T-cell (primary cell): ENCODE measurements at regions of chr3 and their contacts with region 1.

Region 1: GRCh38 chr3:36957862-36958686 is 13.2 kb upstream of the TRANK1 start:
- DNase-seq: peak in 1 of 35 experiments; percentile 20
- ATAC-seq: no peak
- H3K4me3 ChIP-seq: no peak overlapping the region
- H3K4me3 Mint-ChIP-seq: peak overlapping the region in 1 of 3 donors; percentile 4
- H3K27ac ChIP-seq: no peak overlapping the region
- H3K27ac Mint-ChIP-seq: peak overlapping the region; percentile 40 to 50
- H3K4me1 ChIP-seq: peaks cover 0 to 3% of the 10 kb centered on the region in 2 experiments
- H3K4me1 Mint-ChIP-seq: peaks cover 0 to 12% (median 10%) of the 10 kb centered on the region in 3 donors
- H3K27me3 ChIP-seq: no peaks in the 10 kb centered on the region
- H3K27me3 Mint-ChIP-seq: no peaks in the 10 kb centered on the region

Region 2: DNA sequence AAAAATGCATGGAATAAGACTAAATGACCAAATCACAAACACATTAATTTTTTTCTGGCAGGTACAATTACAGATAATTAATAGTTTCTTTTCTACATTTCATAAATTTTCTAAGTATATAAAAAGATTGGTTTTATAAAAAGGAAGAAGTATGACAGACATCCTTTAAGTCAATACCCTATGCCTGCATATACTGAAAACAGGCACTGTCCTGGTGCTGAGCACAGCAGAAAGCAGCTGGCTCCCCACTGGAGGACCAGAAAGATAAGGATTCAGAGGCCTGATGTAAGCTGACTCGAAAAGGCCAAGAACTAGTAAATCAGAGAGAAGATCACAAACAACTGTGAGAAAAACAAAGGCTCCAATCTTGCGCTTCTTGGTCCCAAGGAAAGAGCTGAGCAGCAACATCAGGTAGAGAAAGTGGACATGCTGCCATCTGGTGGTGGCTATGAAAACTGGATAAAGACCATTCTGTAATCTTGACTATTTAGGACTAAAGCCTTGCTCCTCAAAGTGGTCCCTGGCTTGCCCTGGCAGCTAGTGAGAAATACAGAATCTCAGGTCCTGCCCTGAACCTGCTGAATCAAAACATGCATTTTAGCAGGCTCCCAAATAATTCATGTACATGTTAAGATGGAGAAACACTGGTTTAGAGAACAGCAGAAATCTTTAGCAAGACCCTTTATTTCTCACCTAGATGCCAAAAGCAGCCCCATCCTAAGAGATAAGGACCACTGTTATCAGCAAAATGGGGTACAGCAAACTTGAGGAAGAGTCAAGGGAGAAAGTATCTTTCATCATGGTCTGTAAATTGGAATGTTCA is 89.2 kb before region 1 on chr3:
- CTCF ChIA-PET with region 1: interaction called, 3 to 13 read pairs
- POLR2A ChIA-PET with region 1: no interaction called
- DNase-seq: peak in 31 of 35 experiments; percentile 5 to 84 (median 35)
- ATAC-seq: peak; percentile 78 to 83 (median 79)
- H3K4me3 ChIP-seq: no peak overlapping the region
- H3K4me3 Mint-ChIP-seq: no peak overlapping the region
- H3K27ac ChIP-seq: no peak overlapping the region
- H3K27ac Mint-ChIP-seq: peak overlapping the region; percentile 44 to 76
- H3K4me1 ChIP-seq: peaks cover 4 to 10% of the 10 kb centered on the region in 2 experiments
- H3K4me1 Mint-ChIP-seq: peaks cover 28 to 46% (median 37%) of the 10 kb centered on the region in 3 donors
- H3K27me3 ChIP-seq: no peaks in the 10 kb centered on the region
- H3K27me3 Mint-ChIP-seq: no peaks in the 10 kb centered on the region

Region 3: GRCh38 chr3:36893137-36893557 is 64.9 kb before region 1 on chr3:
- CTCF ChIA-PET with region 1: interaction called, 4 to 15 read pairs
- POLR2A ChIA-PET with region 1: interaction called in 1 of 2 experiments, 4 read pairs
- DNase-seq: peak in 22 of 35 experiments; percentile 24 to 77 (median 39)
- ATAC-seq: peak; percentile 87 to 97 (median 90)
- H3K4me3 ChIP-seq: no peak overlapping the region
- H3K4me3 Mint-ChIP-seq: peak overlapping the region in 1 of 3 donors; percentile 26
- H3K27ac ChIP-seq: peak overlapping the region; percentile 59
- H3K27ac Mint-ChIP-seq: peak overlapping the region; percentile 92 to 93
- H3K4me1 ChIP-seq: peaks cover 17 to 32% of the 10 kb centered on the region in 2 experiments
- H3K4me1 Mint-ChIP-seq: peaks cover 64 to 72% (median 68%) of the 10 kb centered on the region in 3 donors
- H3K27me3 ChIP-seq: no peaks in the 10 kb centered on the region
- H3K27me3 Mint-ChIP-seq: no peaks in the 10 kb centered on the region

Region 4: DNA sequence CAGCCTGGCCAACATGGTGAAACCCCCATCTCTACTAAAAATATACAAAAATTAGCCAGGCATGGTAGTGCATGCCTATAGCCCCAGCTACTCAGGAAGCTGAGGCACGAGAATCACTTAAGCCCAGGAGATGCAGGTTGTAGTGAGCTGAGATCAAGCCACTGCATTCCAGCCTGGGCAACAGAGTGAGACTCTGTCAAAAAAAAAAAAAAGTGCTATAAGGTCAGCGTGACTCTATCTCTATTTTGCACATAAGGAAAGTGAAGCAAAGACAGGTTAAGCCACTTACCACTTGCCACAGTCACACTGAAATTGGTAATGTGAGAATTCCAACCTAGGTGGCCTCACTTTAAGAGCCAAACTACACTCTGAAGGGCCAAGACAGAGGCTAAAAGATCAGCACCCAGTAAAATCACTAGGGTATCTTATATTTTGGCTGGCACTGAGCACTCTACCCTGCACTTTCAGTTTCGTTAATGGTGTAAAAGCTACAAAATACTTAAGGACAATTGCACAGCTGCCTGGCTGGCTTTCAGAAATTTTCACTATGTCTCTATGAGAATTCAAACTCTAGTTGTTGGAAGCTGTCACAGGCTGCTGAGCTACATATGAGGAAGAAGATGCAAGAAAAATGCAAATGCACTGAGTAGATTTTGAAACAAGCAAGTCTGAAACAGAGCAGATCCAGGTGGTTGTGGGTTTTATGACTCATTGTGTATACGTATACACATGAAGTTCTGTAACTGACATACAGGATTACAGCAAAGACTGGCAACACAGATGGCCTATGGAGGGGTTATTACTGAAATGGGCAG is 45.9 kb before region 1 on chr3:
- CTCF ChIA-PET with region 1: interaction called, 4 to 9 read pairs
- POLR2A ChIA-PET with region 1: interaction called, 4 to 18 read pairs
- DNase-seq: peak in 20 of 35 experiments; percentile 2 to 72 (median 24)
- ATAC-seq: peak; percentile 83 to 86 (median 84)
- H3K4me3 ChIP-seq: peak overlapping the region; percentile 23 to 47
- H3K4me3 Mint-ChIP-seq: peak overlapping the region; percentile 55 to 72 (median 70)
- H3K27ac ChIP-seq: peak overlapping the region; percentile 88
- H3K27ac Mint-ChIP-seq: peak overlapping the region; percentile 83 to 88
- H3K4me1 ChIP-seq: peaks cover 19 to 29% of the 10 kb centered on the region in 2 experiments
- H3K4me1 Mint-ChIP-seq: peaks cover 41 to 56% (median 48%) of the 10 kb centered on the region in 3 donors
- H3K27me3 ChIP-seq: no peaks in the 10 kb centered on the region
- H3K27me3 Mint-ChIP-seq: no peaks in the 10 kb centered on the region

Region 5: DNA sequence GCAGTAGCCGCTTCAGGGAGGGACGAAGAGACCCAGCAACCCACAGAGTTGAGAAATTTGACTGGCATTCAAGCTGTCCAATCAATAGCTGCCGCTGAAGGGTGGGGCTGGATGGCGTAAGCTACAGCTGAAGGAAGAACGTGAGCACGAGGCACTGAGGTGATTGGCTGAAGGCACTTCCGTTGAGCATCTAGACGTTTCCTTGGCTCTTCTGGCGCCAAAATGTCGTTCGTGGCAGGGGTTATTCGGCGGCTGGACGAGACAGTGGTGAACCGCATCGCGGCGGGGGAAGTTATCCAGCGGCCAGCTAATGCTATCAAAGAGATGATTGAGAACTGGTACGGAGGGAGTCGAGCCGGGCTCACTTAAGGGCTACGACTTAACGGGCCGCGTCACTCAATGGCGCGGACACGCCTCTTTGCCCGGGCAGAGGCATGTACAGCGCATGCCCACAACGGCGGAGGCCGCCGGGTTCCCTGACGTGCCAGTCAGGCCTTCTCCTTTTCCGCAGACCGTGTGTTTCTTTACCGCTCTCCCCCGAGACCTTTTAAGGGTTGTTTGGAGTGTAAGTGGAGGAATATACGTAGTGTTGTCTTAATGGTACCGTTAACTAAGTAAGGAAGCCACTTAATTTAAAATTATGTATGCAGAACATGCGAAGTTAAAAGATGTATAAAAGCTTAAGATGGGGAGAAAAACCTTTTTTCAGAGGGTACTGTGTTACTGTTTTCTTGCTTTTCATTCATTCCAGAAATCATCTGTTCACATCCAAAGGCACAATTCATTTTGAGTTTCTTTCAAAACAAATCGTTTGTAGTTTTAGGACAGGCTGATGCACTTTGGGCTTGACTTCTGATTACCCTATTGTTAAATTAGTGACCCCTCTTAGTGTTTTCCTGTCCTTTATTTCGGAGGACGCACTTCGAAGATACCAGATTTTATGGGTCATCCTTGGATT is 35.5 kb after region 1 on chr3 and contains the start of gene MLH1:
- CTCF ChIA-PET with region 1: interaction called, 4 to 14 read pairs
- POLR2A ChIA-PET with region 1: interaction called, 4 to 5 read pairs
- DNase-seq: peak; percentile 85 to 100 (median 93)
- ATAC-seq: peak; percentile 87 to 90 (median 88)
- H3K4me3 ChIP-seq: peak within 1 kb of the TSS; percentile 91 to 92
- H3K4me3 Mint-ChIP-seq: no peak within 1 kb of the TSS
- H3K27ac ChIP-seq: peak within 1 kb of the TSS; percentile 99
- H3K27ac Mint-ChIP-seq: no peak within 1 kb of the TSS
- H3K4me1 ChIP-seq: peaks cover 25 to 46% of the 10 kb centered on the region in 2 experiments
- H3K4me1 Mint-ChIP-seq: peaks cover 28 to 44% (median 39%) of the 10 kb centered on the region in 3 donors
- H3K27me3 ChIP-seq: no peaks in the 10 kb centered on the region
- H3K27me3 Mint-ChIP-seq: no peaks in the 10 kb centered on the region
- total RNA-seq, gene MLH1: 24.7 to 32.4 (median 28.6) TPM